GM13976 (cell line): ENCODE measurements at regions of chr18 and their contacts with region 1.

Region 1: DNA sequence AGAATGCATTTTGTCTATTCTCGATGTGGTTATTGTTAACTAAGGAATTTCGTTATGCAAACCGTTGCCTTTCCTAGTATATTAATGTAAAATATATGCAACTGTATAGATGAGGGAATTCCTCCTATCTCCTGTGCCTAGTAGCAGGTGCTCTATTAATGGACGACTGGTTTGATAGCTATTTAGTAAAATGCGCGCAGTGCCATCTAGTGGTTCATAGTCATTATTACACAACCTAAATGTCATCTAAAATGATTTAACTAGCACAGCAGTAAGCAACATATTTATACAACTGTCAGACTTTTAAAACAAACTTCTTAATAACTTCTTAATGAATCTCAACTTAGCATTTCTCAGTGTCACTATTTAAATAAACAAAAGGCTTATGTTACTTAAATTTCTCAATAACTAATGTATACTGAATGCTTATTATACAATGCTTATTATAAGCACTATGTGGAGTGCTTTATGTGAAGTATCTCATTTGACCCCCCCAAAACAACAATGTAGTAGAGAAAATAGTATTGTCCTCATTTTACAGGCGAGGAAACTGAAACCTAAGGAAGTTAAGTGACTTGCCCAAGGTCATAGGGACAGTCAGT is 77.9 kb downstream of the DTNA start:
- DNase-seq: peak; percentile 59
- CTCF ChIP-seq: peak; percentile 55

Region 2: GRCh38 chr18:33839441-33840211 is 948.4 kb before region 1 on chr18:
- in situ Hi-C with region 1: loop called (anchors 25 kb)
- DNase-seq: peak; percentile 32
- CTCF ChIP-seq: peak; percentile 57

Region 3: DNA sequence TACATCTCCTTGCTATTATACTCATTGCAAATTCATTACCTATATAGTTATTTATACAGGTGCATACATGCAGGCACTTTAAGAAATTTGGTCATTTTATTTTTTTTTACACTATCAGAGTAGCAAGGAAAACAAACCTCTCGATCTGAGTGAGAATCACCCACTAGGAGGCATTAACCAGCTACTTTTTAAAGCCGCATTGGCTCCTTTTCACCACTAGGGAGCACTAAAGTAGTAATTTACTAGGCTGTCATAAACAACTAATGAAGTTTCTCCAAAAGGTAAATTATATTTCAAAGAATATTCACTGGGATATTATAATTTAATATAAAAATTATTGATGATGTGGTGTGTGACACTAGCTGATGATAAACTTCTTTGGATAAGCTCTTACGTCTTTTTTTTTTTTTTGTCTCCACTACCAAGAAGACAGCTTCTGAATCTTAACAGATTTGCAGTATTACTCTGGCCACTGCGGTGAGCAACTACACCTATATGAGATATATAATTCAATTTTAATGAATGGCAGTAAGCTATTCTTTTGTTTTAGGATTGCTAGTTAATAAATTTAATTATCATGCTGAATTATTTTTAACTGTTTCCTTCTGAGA is 665.2 kb before region 1 on chr18:
- in situ Hi-C with region 1: loop called (anchors 25 kb)
- DNase-seq: peak; percentile 42
- CTCF ChIP-seq: peak; percentile 70